Heart left ventricle (tissue), 16 donors: ENCODE measurements at regions of chr18 and their contacts with region 1.

Region 1: DNA sequence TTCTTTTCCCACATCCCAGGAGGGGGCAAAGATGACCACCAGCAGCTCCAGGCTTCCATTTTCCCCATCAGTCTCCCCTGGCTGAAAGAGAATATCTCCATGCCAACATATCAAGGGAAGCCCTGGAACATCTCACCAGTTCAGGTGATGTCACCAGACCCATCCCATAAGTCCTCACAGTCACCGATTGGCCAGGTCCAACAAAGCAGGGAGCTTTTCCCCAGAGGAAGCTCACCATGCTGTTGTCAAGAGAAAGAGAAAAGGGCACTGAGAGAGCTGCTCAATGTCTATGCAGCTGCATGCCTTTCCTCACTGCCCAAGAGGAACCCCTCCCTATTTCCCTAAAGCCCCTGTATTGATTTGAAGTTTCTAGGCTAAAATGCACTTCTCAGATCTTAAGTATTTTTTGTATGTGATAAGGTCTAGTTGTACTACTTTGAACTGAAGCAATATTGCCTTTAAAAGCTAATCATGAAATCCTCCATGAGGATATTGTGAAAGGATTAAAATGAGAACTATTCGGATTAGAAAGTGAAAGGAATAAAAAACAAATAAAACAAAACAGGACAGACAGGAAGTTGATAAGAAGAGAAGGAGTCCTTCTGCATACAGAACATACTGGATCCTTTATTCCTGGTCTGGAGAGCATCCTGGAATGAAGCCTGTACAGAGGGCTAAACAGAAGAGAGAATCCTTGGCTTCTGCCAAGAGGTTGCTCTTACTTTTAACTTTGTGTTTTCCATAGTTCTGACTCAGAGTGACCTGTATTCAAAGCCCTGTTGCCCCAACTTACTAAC is 45.2 kb upstream of the CTIF start:
- DNase-seq: no peak
- ATAC-seq: peak in 1 of 4 donors; percentile 32
- H3K4me3 ChIP-seq: no peak overlapping the region
- H3K27ac ChIP-seq: peak overlapping the region in 2 of 12 donors; percentile 5 to 8
- H3K4me1 ChIP-seq: peaks cover 0 to 26% (median 13%) of the 10 kb centered on the region in 12 donors
- H3K27me3 ChIP-seq: no peaks in the 10 kb centered on the region
- CTCF ChIP-seq: no peak
- POLR2A ChIP-seq: no peak

Region 2: DNA sequence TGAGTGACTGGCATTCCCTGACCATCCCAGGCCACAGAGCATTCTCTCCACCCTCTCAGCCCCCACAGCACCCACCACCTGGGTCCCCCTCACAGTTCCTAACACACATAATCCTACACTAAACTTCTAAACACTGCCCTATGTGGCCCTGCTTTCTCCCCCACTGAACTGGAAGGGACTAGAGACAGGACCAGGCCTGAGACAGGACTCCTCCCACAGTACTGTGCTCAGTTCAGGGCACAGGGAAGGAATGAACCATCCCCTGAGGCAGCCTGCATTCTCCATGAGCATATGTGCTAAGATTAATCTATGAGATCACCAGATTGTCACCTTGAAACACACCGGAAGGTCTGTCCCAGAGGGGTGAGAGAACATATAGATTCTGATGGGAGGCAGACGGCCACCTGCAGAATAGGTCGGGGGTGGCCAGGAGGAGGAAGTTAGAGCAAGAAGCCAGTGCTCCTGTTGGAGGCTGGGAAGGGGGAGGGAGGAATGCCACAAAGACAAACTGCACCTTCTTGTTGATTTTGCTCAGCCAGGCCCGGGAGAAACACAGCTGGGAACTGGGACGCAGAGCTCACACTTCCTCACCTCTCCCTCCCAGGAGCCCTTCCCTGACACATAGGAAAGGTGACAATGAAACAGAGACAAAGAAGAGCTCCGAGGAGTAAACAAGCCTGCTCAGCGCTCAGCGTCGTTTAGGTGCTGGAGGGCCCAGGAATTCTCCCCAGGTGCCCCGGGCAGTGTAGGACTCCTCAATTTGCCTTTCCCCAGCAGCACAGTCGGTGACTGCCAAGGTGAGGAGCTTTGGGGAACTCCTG is 136.6 kb before region 1 on chr18:
- intact Hi-C with region 1: no loop called
- DNase-seq: no peak
- ATAC-seq: peak in 1 of 4 donors; percentile 50
- H3K4me3 ChIP-seq: no peak overlapping the region
- H3K27ac ChIP-seq: no peak overlapping the region
- H3K4me1 ChIP-seq: peaks cover 0 to 14% (median 0%) of the 10 kb centered on the region in 12 donors
- H3K27me3 ChIP-seq: no peaks in the 10 kb centered on the region
- CTCF ChIP-seq: no peak
- POLR2A ChIP-seq: no peak

Region 3: GRCh38 chr18:48514786-48515185 is 21.2 kb after region 1 on chr18:
- intact Hi-C with region 1: no loop called
- DNase-seq: no peak
- ATAC-seq: no peak
- H3K4me3 ChIP-seq: no peak overlapping the region
- H3K27ac ChIP-seq: no peak overlapping the region
- H3K4me1 ChIP-seq: no peaks in the 10 kb centered on the region
- H3K27me3 ChIP-seq: peaks cover 0 to 4% (median 0%) of the 10 kb centered on the region in 9 donors
- CTCF ChIP-seq: no peak
- POLR2A ChIP-seq: no peak

Region 4: GRCh38 chr18:48649231-48649630 is 155.6 kb after region 1 on chr18:
- intact Hi-C with region 1: loop called in 1 of 10 experiments (anchors 5 kb)
- DNase-seq: no peak
- ATAC-seq: no peak
- H3K4me3 ChIP-seq: no peak overlapping the region
- H3K27ac ChIP-seq: no peak overlapping the region
- H3K4me1 ChIP-seq: no peaks in the 10 kb centered on the region
- H3K27me3 ChIP-seq: no peaks in the 10 kb centered on the region
- CTCF ChIP-seq: no peak
- POLR2A ChIP-seq: no peak